HCT116 (cell line): ENCODE measurements at regions of chr3 and their contacts with region 1.

Region 1: DNA sequence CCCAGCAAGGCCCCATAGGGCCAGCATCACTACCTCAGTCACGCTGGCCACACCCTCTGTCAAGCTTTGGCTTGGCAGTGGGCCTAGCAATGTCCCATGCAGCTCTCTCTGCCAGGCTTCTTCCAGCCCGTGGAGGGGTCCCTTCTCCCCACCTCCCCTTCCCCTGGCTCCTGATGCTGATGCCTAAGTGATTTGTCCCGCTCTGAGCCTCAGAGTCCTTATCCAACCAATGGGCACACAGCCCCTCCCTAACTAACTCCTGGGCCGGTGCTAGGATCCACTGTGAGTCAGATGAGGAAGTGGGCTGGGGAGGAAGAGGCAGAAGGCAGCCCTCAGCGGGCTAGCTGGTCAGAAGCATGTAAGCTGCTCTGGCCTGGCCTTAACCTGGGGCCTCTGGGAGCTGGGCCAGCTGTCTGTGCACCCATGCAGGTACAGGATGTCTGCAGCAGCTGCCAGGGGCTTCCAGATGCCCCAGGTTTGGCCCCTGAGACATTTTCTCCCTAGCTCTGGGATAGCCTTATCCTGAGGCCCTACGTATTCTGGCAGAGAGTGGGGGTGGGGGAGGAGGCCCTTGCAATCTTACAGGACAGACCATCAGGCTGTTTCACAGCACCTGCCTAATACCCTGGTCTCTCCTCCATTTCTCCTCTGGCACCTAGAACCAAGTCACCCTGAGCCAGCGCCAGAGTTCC is 740 bp upstream of the ZBTB47 start:
- DNase-seq: peak; percentile 69
- ATAC-seq: peak; percentile 72
- H3K4me3 ChIP-seq: peak overlapping the region; percentile 75 to 86
- H3K27ac ChIP-seq: peak overlapping the region; percentile 84
- H3K4me1 ChIP-seq: peaks cover 42 to 63% of the 10 kb centered on the region in 2 experiments
- H3K27me3 ChIP-seq: no peaks in the 10 kb centered on the region
- CTCF ChIP-seq: no peak
- POLR2A ChIP-seq: no peak
- RAD21 ChIP-seq: no peak

Region 2: DNA sequence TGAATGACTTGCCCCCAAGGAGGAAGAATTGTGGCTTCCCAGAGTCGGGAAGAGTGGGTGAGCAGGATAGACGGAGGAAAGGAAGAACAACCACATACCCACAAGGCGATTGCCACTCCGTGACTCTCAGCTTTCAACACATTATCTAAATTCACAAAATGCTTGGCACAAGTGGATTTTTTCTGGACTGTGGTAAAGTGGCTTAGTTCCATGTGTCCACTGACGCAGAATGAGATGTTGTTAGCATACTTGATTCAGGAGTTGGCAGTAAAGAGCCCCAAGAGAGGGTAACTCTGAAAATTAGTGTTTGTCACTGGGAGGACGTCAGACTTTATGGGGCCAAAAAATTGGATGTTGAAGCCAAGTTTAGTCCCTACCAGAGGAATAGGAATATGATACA is 1652.3 kb before region 1 on chr3:
- CTCF ChIA-PET with region 1: no interaction called
- POLR2A ChIA-PET with region 1: no interaction called
- RAD21 ChIA-PET with region 1: no interaction called
- intact Hi-C with region 1: no loop called
- DNase-seq: no peak
- ATAC-seq: no peak
- H3K4me3 ChIP-seq: no peak overlapping the region
- H3K27ac ChIP-seq: no peak overlapping the region
- H3K4me1 ChIP-seq: no peaks in the 10 kb centered on the region
- H3K27me3 ChIP-seq: peaks cover 20% of the 10 kb centered on the region
- CTCF ChIP-seq: no peak
- POLR2A ChIP-seq: no peak
- RAD21 ChIP-seq: no peak

Region 3: DNA sequence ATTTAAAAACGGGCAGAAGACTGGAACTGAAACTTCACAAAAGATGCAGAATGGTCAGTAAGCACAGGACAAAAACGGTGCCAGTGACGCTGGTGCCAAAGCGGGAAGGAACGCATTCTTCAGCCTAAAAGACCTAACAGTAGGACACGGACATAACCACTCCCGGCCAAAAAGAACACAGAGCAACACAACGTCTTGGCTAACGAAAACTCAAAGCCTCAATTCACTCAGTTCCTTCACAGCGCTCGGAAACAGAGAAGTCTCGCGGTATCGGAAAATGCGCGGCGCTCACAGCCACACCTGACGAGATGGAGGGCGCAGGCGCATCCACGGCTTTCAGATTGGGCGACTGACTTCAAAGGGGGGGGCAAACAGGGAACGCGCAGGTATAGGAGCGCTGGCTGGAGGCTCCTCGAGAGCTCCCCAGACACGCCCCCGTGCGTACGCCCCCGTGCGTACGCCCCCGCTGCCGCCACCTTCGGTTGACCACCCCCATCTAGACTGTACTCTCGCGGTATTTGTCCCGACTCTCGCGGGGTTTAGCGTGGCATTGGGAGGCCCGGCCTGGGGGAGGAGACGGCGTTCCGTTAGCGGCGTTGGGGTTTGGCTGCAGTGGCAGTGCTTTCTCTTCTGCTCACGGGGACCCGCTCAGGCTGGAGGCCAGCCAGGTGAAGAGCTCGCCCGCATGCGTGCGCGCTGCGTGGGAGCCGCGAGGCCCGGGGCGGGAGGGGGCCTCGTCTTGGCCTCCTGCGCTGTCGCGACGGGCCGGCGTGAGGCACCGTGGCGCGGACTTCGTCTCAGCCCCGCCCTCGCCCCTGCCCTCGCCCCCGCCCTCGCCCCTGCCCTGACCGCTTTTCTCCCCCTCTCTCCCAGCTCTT is 52.4 kb before region 1 on chr3 and contains the start of gene NKTR:
- CTCF ChIA-PET with region 1: no interaction called
- POLR2A ChIA-PET with region 1: interaction called, 9 read pairs
- RAD21 ChIA-PET with region 1: no interaction called
- intact Hi-C with region 1: loop called (anchors 5 kb)
- DNase-seq: peak; percentile 98
- ATAC-seq: peak; percentile 91
- H3K4me3 ChIP-seq: peak within 1 kb of the TSS; percentile 75 to 85
- H3K27ac ChIP-seq: peak within 1 kb of the TSS; percentile 81
- H3K4me1 ChIP-seq: peaks cover 7 to 30% of the 10 kb centered on the region in 2 experiments; a peak in 3 of 4 replicates
- H3K27me3 ChIP-seq: no peaks in the 10 kb centered on the region
- CTCF ChIP-seq: no peak
- POLR2A ChIP-seq: peak; percentile 92
- RAD21 ChIP-seq: no peak
- total RNA-seq, gene NKTR: 59.7 TPM

Region 4: GRCh38 chr3:42739401-42740158 is 86.8 kb after region 1 on chr3:
- CTCF ChIA-PET with region 1: interaction called, 4 read pairs
- POLR2A ChIA-PET with region 1: no interaction called
- RAD21 ChIA-PET with region 1: interaction called in 1 of 2 experiments, 3 read pairs
- intact Hi-C with region 1: loop called (anchors 5 kb)
- DNase-seq: no peak
- ATAC-seq: no peak
- H3K4me3 ChIP-seq: no peak overlapping the region
- H3K27ac ChIP-seq: no peak overlapping the region
- H3K4me1 ChIP-seq: peaks cover 0 to 6% of the 10 kb centered on the region in 2 experiments; a peak in 2 of 4 replicates
- H3K27me3 ChIP-seq: no peaks in the 10 kb centered on the region
- CTCF ChIP-seq: no peak
- POLR2A ChIP-seq: no peak
- RAD21 ChIP-seq: no peak